MCF 10A (cell line): ENCODE measurements at regions of chr14 and their contacts with region 1.

Region 1: GRCh38 chr14:57735276-57735675 is 130.6 kb downstream of the SLC35F4 start:
- DNase-seq: no peak
- H3K4me3 Mint-ChIP-seq: no peak overlapping the region
- H3K27ac Mint-ChIP-seq: no peak overlapping the region
- H3K4me1 Mint-ChIP-seq: peaks cover 7% of the 10 kb centered on the region
- H3K27me3 Mint-ChIP-seq: no peaks in the 10 kb centered on the region
- CTCF ChIP-seq: no peak

Region 2: DNA sequence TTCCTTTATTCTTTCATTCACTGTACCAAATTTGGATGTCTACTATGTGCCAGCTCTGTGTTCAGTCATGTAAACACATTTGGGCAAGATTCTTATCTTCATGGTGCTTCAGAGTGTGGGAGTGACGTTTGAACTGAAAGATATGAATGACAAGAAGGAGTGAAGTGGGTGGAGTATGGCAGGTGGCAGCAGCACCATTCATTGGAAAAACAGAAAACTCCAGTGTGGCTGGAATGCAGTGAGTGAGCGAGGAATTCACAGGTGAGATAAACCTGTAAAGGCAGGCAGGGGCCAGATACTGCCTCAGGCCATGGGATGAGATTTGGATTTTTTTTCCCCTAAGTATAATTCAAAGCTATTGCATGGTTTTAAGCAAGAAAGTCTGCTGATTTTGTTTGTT is 100.9 kb before region 1 on chr14:
- CTCF ChIA-PET with region 1: no interaction called
- POLR2A ChIA-PET with region 1: no interaction called
- intact Hi-C with region 1: no loop called
- DNase-seq: no peak
- H3K4me3 Mint-ChIP-seq: no peak overlapping the region
- H3K27ac Mint-ChIP-seq: no peak overlapping the region
- H3K4me1 Mint-ChIP-seq: no peaks in the 10 kb centered on the region
- H3K27me3 Mint-ChIP-seq: peaks cover 18% of the 10 kb centered on the region
- CTCF ChIP-seq: no peak

Region 3: GRCh38 chr14:57747036-57747435 is 11.8 kb after region 1 on chr14:
- CTCF ChIA-PET with region 1: interaction called, 3 read pairs
- POLR2A ChIA-PET with region 1: interaction called, 21 read pairs
- intact Hi-C with region 1: no loop called
- DNase-seq: peak; percentile 36
- H3K4me3 Mint-ChIP-seq: no peak overlapping the region
- H3K27ac Mint-ChIP-seq: peak overlapping the region; percentile 46
- H3K4me1 Mint-ChIP-seq: peaks cover 30% of the 10 kb centered on the region
- H3K27me3 Mint-ChIP-seq: no peaks in the 10 kb centered on the region
- CTCF ChIP-seq: no peak